SK-N-SH (cell line): ENCODE measurements at regions of chr11 and their contacts with region 1.

Region 1: GRCh38 chr11:8566613-8567210 is 27.3 kb downstream of the STK33 start:
- DNase-seq: peak; percentile 14
- H3K4me3 ChIP-seq: peak overlapping the region in 1 of 2 experiments; percentile 17; a peak in 1 of 4 replicates
- H3K27ac ChIP-seq: no peak overlapping the region; a peak in 1 of 4 replicates
- H3K4me1 ChIP-seq: peaks cover 0 to 10% of the 10 kb centered on the region in 2 experiments; a peak in 1 of 4 replicates
- H3K27me3 ChIP-seq: no peaks in the 10 kb centered on the region
- CTCF ChIP-seq: peak; percentile 84
- EP300 ChIP-seq: no peak
- RAD21 ChIP-seq: peak; percentile 89

Region 2: GRCh38 chr11:8219257-8220021 is 347.3 kb before region 1 on chr11:
- CTCF ChIA-PET with region 1: interaction called, 18 read pairs
- POLR2A ChIA-PET with region 1: no interaction called
- DNase-seq: peak; percentile 80
- H3K4me3 ChIP-seq: no peak overlapping the region
- H3K27ac ChIP-seq: no peak overlapping the region; a peak in 1 of 4 replicates
- H3K4me1 ChIP-seq: peaks cover 0 to 28% of the 10 kb centered on the region in 2 experiments; a peak in 1 of 4 replicates
- H3K27me3 ChIP-seq: no peaks in the 10 kb centered on the region; the same call in 1 of the 2 replicates
- CTCF ChIP-seq: peak; percentile 75
- EP300 ChIP-seq: no peak
- RAD21 ChIP-seq: peak; percentile 69

Region 3: GRCh38 chr11:8318336-8318935 is 248.3 kb before region 1 on chr11:
- CTCF ChIA-PET with region 1: no interaction called
- POLR2A ChIA-PET with region 1: no interaction called
- DNase-seq: no peak
- H3K4me3 ChIP-seq: no peak overlapping the region
- H3K27ac ChIP-seq: no peak overlapping the region
- H3K4me1 ChIP-seq: peaks cover 0 to 13% of the 10 kb centered on the region in 2 experiments; a peak in 2 of 4 replicates
- H3K27me3 ChIP-seq: 0 out of 2 replicates have a peak, but pooled peaks cover 4% of the 10 kb centered on the region
- CTCF ChIP-seq: no peak; the same call in 1 of the 2 replicates
- EP300 ChIP-seq: no peak
- RAD21 ChIP-seq: peak; percentile 43

Region 4: DNA sequence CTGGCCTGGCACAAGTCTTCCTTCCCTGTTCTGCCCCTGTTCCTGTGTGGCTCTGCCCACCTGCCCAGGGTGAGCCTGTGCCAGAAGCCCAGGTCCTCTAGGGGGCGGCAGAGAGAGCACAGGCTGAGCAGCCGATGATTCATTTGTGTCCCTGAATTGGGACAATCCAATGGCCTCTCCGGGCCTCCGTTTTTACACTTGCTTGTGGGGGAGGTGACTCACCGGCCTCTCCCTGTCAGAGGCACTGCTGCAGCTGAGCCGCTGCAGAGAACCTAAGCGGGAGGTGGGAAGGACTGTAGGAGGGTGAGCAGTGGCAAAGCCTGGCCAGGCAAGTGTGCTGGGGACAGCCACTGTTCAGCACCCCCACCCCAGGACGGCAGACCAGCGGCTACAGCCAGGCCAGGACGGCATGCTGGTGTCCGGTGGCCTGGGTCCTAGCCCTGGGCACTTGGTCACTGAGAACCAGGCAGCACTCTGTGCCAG is 237.8 kb before region 1 on chr11:
- CTCF ChIA-PET with region 1: interaction called, 17 read pairs
- POLR2A ChIA-PET with region 1: interaction called, 3 read pairs
- DNase-seq: peak; percentile 89
- H3K4me3 ChIP-seq: peak overlapping the region in 1 of 2 experiments; percentile 45; a peak in 3 of 4 replicates
- H3K27ac ChIP-seq: peak overlapping the region in 1 of 2 experiments; percentile 28; a peak in 1 of 4 replicates
- H3K4me1 ChIP-seq: peaks cover 6 to 23% of the 10 kb centered on the region in 2 experiments; a peak in 2 of 4 replicates
- H3K27me3 ChIP-seq: no peaks in the 10 kb centered on the region
- CTCF ChIP-seq: peak; percentile 88
- EP300 ChIP-seq: no peak
- RAD21 ChIP-seq: peak; percentile 60

Region 5: DNA sequence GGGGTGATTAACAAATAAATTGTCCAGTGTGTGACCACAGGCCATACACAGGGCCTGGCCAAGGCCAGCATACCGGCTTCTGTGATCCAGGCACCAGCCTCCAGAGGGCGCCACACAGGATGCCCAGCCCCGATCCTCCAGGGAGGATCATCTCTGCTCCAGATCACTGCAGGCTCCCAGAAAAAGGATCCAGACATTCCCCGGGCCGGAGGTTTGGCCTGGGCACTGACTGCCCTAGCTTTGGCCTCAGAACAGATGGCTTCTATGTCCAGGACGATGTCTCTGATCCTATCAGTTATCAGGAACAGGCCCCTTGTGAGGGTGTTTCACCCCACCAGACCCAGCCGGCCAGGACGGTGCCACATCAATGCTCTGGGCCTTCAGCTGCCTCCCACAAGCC is 228.6 kb before region 1 on chr11:
- CTCF ChIA-PET with region 1: interaction called, 16 read pairs
- POLR2A ChIA-PET with region 1: no interaction called
- DNase-seq: peak; percentile 94
- H3K4me3 ChIP-seq: no peak overlapping the region; a peak in 1 of 4 replicates
- H3K27ac ChIP-seq: peak overlapping the region in 1 of 2 experiments; percentile 72; a peak in 2 of 4 replicates
- H3K4me1 ChIP-seq: peaks cover 0 to 40% of the 10 kb centered on the region in 2 experiments; a peak in 1 of 4 replicates
- H3K27me3 ChIP-seq: no peaks in the 10 kb centered on the region
- CTCF ChIP-seq: peak; percentile 78
- EP300 ChIP-seq: peak in 1 of 2 experiments; percentile 66; a peak in 1 of 4 replicates
- RAD21 ChIP-seq: peak; percentile 72

Region 6: GRCh38 chr11:8577791-8578581 is 11.3 kb after region 1 on chr11:
- CTCF ChIA-PET with region 1: interaction called, 20 read pairs
- POLR2A ChIA-PET with region 1: no interaction called
- DNase-seq: no peak
- H3K4me3 ChIP-seq: no peak overlapping the region
- H3K27ac ChIP-seq: no peak overlapping the region
- H3K4me1 ChIP-seq: no peaks in the 10 kb centered on the region
- H3K27me3 ChIP-seq: no peaks in the 10 kb centered on the region
- CTCF ChIP-seq: no peak
- EP300 ChIP-seq: no peak
- RAD21 ChIP-seq: no peak